Natural killer cell (primary cell): ENCODE measurements at regions of chr1 and their contacts with region 1.

Region 1: DNA sequence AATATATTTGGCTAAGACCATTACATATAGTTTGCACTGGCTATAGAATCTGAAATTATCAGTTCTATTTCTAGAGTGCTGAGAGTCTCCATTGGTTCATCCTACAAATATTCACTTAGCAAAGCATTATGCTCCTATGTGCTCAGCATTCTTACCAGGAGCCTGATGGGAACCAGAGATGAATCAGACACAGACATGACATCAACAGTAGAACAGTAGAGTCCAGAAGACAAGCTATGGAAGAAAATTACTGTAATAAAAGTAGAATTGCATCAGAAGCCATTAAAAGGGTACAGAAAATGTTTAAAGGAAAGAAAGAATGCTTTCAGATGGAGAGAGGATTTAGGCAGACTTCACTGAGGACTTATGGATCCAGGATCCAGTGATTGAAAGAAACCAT is 271.7 kb upstream of the SNX7 start:
- DNase-seq: no peak
- ATAC-seq: no peak
- H3K4me3 ChIP-seq: no peak overlapping the region
- H3K4me3 Mint-ChIP-seq: no peak overlapping the region
- H3K27ac ChIP-seq: no peak overlapping the region
- H3K27ac Mint-ChIP-seq: peak overlapping the region; percentile 29 to 37
- H3K4me1 ChIP-seq: peaks cover 13% of the 10 kb centered on the region
- H3K4me1 Mint-ChIP-seq: peaks cover 32 to 34% of the 10 kb centered on the region in 2 donors
- H3K27me3 ChIP-seq: no peaks in the 10 kb centered on the region
- H3K27me3 Mint-ChIP-seq: no peaks in the 10 kb centered on the region
- CTCF ChIP-seq: no peak

Region 2: GRCh38 chr1:98323906-98324358 is 65.9 kb before region 1 on chr1:
- intact Hi-C with region 1: loop called (anchors 2 kb)
- DNase-seq: peak; percentile 28 to 55
- ATAC-seq: peak; percentile 89 to 96 (median 90)
- H3K4me3 ChIP-seq: peak overlapping the region; percentile 6
- H3K4me3 Mint-ChIP-seq: peak overlapping the region; percentile 67
- H3K27ac ChIP-seq: peak overlapping the region; percentile 16
- H3K27ac Mint-ChIP-seq: peak overlapping the region; percentile 15 to 67
- H3K4me1 ChIP-seq: peaks cover 10% of the 10 kb centered on the region
- H3K4me1 Mint-ChIP-seq: peaks cover 45 to 48% of the 10 kb centered on the region in 2 donors
- H3K27me3 ChIP-seq: no peaks in the 10 kb centered on the region
- H3K27me3 Mint-ChIP-seq: no peaks in the 10 kb centered on the region
- CTCF ChIP-seq: no peak

Region 3: GRCh38 chr1:98410082-98410481 is 20.3 kb after region 1 on chr1:
- intact Hi-C with region 1: no loop called
- DNase-seq: no peak
- ATAC-seq: no peak
- H3K4me3 ChIP-seq: no peak overlapping the region
- H3K4me3 Mint-ChIP-seq: no peak overlapping the region
- H3K27ac ChIP-seq: no peak overlapping the region
- H3K27ac Mint-ChIP-seq: no peak overlapping the region
- H3K4me1 ChIP-seq: no peaks in the 10 kb centered on the region
- H3K4me1 Mint-ChIP-seq: peaks cover 7 to 11% of the 10 kb centered on the region in 2 donors
- H3K27me3 ChIP-seq: no peaks in the 10 kb centered on the region
- H3K27me3 Mint-ChIP-seq: no peaks in the 10 kb centered on the region
- CTCF ChIP-seq: no peak

Region 4: GRCh38 chr1:98761219-98761865 is 371.5 kb after region 1 on chr1:
- intact Hi-C with region 1: no loop called
- DNase-seq: no peak
- ATAC-seq: no peak
- H3K4me3 ChIP-seq: no peak overlapping the region
- H3K4me3 Mint-ChIP-seq: no peak overlapping the region
- H3K27ac ChIP-seq: no peak overlapping the region
- H3K27ac Mint-ChIP-seq: no peak overlapping the region
- H3K4me1 ChIP-seq: no peaks in the 10 kb centered on the region
- H3K4me1 Mint-ChIP-seq: no peaks in the 10 kb centered on the region
- H3K27me3 ChIP-seq: no peaks in the 10 kb centered on the region
- H3K27me3 Mint-ChIP-seq: no peaks in the 10 kb centered on the region
- CTCF ChIP-seq: no peak